Activated naive CD4-positive, alpha-beta T cell treated with anti-CD3 and anti-CD28 coated beads for 36 hours (primary cell): ENCODE measurements at regions of chr5 and their contacts with region 1.

Region 1: DNA sequence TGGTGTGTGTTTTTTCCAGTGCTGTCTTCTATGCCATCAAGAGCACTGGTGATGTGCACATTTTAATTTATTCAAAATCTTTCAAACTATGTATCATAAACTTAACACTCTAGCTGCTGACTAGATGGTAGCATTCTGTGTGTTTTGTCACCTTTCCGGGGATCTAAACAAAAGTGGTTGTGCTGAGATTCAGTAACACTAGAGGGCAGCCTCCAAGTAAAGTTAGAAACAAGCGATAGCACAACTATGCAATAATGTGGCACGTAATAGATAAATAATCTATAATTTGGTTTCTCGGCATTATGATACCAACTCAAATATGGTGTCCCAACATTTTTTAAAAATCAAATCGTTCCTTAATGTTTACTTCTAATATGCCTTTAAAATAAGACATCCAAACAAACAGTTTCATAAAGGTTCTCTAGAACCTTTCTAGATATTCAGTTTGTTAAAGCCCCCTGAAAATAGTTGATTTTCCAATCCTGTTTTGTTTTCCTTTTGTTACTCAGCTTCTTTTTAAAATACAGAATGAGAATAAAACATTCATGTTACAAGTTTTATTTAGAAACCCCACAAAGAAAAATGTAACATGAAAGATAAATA is 16.9 kb downstream of the SEMA6A start:
- DNase-seq: no peak
- H3K4me3 Mint-ChIP-seq: no peak overlapping the region
- H3K27ac Mint-ChIP-seq: no peak overlapping the region
- H3K4me1 Mint-ChIP-seq: no peaks in the 10 kb centered on the region
- H3K27me3 Mint-ChIP-seq: no peaks in the 10 kb centered on the region

Region 2: DNA sequence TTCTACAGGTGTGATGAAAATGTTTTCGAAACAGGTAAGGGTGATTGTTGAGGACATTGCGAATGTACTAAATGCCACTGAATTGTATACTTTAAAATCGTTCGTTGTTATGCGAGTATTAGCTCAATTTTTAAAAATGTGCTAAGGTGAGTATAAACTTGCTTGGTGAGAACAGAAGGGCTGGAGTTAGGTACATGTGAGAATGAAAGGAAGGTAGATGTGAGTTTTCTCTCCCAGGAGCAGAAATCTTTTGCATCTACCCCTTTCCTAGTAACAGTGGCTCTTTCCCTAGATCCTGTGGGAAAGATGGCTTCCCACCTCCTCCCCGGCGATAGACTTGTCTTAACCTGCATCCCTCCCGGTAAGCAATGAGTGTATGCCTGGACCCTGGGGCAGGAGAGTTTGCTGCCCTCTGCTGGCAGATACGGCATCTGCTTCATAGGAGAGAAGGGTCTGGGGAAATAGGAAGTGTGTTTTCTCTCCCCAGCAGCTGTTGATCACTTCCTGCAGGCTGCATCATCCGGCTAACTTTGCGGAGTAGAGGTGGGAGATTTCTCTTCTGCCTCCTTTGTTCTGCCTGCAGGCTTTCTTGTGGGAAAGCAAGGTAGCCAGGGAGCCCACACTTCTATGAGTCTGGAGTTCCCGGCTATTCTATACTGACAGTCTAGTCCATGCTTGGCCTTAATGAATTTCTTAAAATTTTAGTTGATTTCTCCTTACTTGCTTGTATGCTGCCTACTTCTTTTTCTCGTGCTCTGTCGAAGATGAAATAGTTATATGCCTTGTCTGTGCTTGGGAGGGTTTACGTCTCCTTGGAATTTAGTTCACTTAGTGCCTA is 390.1 kb after region 1 on chr5:
- CTCF ChIA-PET with region 1: no interaction called
- intact Hi-C with region 1: loop called (anchors 1 kb)
- DNase-seq: peak; percentile 79
- H3K4me3 Mint-ChIP-seq: no peak overlapping the region
- H3K27ac Mint-ChIP-seq: no peak overlapping the region
- H3K4me1 Mint-ChIP-seq: no peaks in the 10 kb centered on the region
- H3K27me3 Mint-ChIP-seq: peaks cover 2% of the 10 kb centered on the region